ENCODE measurements at regions of chr20 and their contacts with region 1.

Region 1: GRCh38 chr20:58888521-58889333 is 36.2 kb downstream of the GNAS start:
- DNase-seq: peak; percentile 73
- H3K4me3 ChIP-seq: peak overlapping the region; percentile 66 to 89 (median 83)
- H3K27ac ChIP-seq: peak overlapping the region; percentile 59
- H3K4me1 ChIP-seq: peaks cover 10% of the 10 kb centered on the region
- H3K27me3 ChIP-seq: no peaks in the 10 kb centered on the region
- CTCF ChIP-seq: no peak

Region 2: DNA sequence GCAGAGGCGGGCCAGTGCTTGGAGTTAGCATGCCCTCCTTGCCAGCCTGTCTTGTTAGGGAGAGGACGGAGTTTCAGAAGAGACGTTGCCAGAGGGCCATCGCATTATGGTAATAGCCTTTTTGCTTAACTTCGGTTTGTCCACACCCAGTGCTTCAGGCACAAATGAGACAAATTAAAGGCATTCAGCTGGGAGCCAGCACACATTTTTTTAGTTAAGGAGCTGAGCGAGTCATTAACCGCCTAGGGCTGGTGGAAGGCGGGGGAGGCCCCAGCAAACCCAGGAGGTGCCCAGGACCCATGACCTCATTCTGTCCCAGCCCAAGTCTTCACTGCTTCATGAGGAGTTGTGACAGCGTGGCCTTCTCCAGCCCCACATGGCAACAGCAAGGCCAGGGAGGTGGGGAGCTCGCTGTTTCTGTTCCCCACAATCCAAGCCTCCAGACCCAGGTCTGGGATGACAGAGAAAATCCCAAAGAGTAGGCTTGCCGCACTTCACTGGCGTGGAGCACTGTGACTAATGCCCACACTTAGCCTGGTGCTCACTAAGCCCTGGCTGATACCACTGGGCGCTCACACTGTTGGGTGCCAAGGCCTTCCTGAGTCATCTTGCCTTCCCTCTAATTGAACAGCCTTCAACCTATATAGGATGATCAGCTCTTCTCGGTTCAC is 897.4 kb before region 1 on chr20:
- CTCF ChIA-PET with region 1: no interaction called
- dilution Hi-C with region 1: no loop called
- in situ Hi-C with region 1: no loop called
- intact Hi-C with region 1: no loop called
- DNase-seq: peak; percentile 99
- H3K4me3 ChIP-seq: no peak overlapping the region
- H3K27ac ChIP-seq: peak overlapping the region; percentile 94
- H3K4me1 ChIP-seq: peaks cover 49% of the 10 kb centered on the region
- H3K27me3 ChIP-seq: no peaks in the 10 kb centered on the region
- CTCF ChIP-seq: no peak

Region 3: DNA sequence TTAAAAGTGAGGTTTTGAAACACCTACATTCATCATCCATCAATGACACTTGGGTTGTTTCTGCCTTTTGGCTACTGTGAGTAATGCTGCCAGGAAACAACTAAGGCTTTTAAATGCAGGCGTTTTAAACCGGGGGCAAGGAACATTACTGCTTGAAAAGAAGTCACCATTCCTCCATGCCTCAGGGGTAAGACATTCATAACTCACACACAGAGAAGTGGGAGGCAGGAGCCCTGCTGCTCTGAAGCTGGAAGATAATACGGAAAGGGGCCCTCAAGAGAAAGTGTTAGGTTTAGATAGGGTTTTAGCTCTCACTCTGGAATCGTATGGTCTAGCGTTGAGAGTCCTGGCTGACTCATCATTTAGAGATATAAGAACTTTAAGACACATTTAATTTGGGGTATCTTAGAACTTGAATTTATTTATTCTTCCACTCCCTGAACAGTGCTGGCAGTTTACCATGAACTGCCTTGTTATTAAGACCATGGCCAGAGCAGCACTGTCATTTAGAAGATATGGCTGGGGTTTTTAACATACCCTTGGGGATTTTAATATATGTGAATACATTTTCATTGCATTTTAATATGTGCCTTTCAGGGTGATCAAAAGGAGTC is 132.3 kb after region 1 on chr20:
- CTCF ChIA-PET with region 1: no interaction called
- dilution Hi-C with region 1: no loop called
- in situ Hi-C with region 1: no loop called
- intact Hi-C with region 1: loop called (anchors 1 kb)
- DNase-seq: peak; percentile 84
- H3K4me3 ChIP-seq: no peak overlapping the region
- H3K27ac ChIP-seq: peak overlapping the region; percentile 1
- H3K4me1 ChIP-seq: peaks cover 24% of the 10 kb centered on the region
- H3K27me3 ChIP-seq: no peaks in the 10 kb centered on the region
- CTCF ChIP-seq: no peak

Region 4: GRCh38 chr20:59386809-59387208 is 498.1 kb after region 1 on chr20:
- CTCF ChIA-PET with region 1: no interaction called
- dilution Hi-C with region 1: no loop called
- in situ Hi-C with region 1: no loop called
- intact Hi-C with region 1: no loop called
- DNase-seq: no peak
- H3K4me3 ChIP-seq: no peak overlapping the region
- H3K27ac ChIP-seq: no peak overlapping the region
- H3K4me1 ChIP-seq: no peaks in the 10 kb centered on the region
- H3K27me3 ChIP-seq: no peaks in the 10 kb centered on the region
- CTCF ChIP-seq: no peak